PC-9 (cell line): ENCODE measurements at regions of chr13 and their contacts with region 1.

Region 1: GRCh38 chr13:113584205-113584869 is at the start of gene TFDP1:
- DNase-seq: peak; percentile 81 to 86
- H3K4me3 ChIP-seq: peak within 1 kb of the TSS; percentile 78
- H3K27ac ChIP-seq: no peak within 1 kb of the TSS
- H3K4me1 ChIP-seq: peaks cover 9% of the 10 kb centered on the region; the same call in 1 of the 2 replicates
- H3K27me3 ChIP-seq: no peaks in the 10 kb centered on the region
- CTCF ChIP-seq: no peak
- total RNA-seq, gene TFDP1: 84.2 and 107 TPM in 2 replicates

Region 2: GRCh38 chr13:113086031-113086750 is 498.1 kb before region 1 on chr13:
- CTCF ChIA-PET with region 1: no interaction called
- POLR2A ChIA-PET with region 1: no interaction called
- intact Hi-C with region 1: no loop called
- DNase-seq: no peak
- H3K4me3 ChIP-seq: no peak overlapping the region
- H3K27ac ChIP-seq: no peak overlapping the region
- H3K4me1 ChIP-seq: no peaks in the 10 kb centered on the region
- H3K27me3 ChIP-seq: no peaks in the 10 kb centered on the region
- CTCF ChIP-seq: no peak

Region 3: GRCh38 chr13:113490496-113491417 is 93.6 kb before region 1 on chr13 and contains the start of gene DCUN1D2:
- CTCF ChIA-PET with region 1: no interaction called
- POLR2A ChIA-PET with region 1: no interaction called
- intact Hi-C with region 1: loop called (anchors 1 kb)
- DNase-seq: peak; percentile 76 to 96
- H3K4me3 ChIP-seq: peak within 1 kb of the TSS; percentile 86
- H3K27ac ChIP-seq: peak within 1 kb of the TSS; percentile 23
- H3K4me1 ChIP-seq: peaks cover 55% of the 10 kb centered on the region
- H3K27me3 ChIP-seq: no peaks in the 10 kb centered on the region
- CTCF ChIP-seq: no peak
- total RNA-seq, gene DCUN1D2: 33.0 and 34.7 TPM in 2 replicates

Region 4: DNA sequence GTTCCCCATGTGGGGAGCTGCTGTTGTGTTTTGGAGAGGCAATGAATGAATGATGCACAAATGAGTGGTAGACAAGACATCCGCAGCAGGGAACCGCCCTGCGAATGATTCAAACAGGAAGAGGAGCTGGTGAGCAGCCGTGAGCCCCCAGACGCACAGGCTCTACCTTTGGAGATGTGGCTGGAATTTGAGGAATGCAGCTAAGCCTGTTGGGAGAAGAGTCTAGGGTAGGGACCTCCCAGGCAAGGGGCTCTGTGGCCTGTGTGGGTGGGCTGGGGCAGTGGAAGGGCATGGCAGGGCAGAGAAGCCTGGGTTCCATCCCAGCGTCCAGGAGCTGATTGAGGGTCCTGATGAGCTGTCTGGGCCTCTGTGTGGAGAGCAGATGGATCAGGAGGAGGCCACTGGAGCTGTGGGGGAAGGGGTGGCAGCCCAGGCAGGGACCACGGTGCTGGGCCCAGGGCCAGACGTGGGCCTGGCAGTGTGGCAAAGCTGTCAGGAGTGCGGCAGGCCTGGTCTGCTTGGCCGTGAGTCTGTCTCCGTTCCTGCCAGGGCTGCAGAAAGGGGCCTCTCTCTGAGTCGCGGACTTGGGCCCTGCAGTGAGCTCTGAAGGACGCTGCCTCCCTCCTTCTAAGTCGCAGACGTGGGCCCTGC is 52.1 kb before region 1 on chr13:
- CTCF ChIA-PET with region 1: no interaction called
- POLR2A ChIA-PET with region 1: interaction called, 4 read pairs
- intact Hi-C with region 1: loop called (anchors 2 kb)
- DNase-seq: peak; percentile 85 to 92
- H3K4me3 ChIP-seq: no peak overlapping the region
- H3K27ac ChIP-seq: peak overlapping the region; percentile 54
- H3K4me1 ChIP-seq: peaks cover 43% of the 10 kb centered on the region
- H3K27me3 ChIP-seq: no peaks in the 10 kb centered on the region
- CTCF ChIP-seq: no peak

Region 5: DNA sequence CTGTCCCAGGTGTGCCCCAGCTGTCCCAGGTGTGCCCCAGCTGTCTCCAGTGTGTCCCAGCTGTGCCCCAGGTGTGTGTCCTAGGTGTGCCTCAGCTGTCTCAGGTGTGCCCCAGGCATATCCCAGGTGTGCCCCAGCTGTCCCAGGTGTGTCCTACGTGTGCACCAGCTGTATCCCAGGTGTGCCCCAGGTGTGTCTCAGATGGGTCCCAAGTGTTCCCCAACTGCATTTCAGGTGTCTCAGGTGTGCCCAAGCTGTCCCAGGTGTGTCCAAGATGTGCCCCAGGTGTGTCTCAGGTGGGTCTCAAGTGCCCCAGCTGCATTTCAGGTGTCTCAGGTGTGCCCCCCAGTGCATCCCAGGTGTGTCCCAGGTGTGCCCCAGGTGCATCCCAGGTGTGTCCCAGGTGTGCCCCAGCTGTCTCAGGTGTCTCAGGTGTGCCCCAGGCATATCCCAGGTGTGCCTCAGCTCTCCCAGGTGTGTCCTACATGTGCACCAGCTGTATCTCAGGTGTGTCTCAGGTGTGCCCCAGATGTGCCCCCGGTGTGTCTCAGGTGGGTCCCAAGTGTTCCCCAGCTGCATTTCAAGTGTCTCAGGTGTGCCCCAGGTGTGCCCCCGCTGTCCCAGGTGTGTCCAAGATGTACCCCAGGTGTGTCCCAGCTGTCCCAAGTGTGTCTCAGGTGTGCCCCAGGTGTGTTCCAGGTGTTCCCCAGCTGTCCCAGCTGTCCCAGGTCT is 81.4 kb after region 1 on chr13:
- CTCF ChIA-PET with region 1: no interaction called
- POLR2A ChIA-PET with region 1: interaction called, 13 read pairs
- intact Hi-C with region 1: no loop called
- DNase-seq: no peak
- H3K4me3 ChIP-seq: no peak overlapping the region
- H3K27ac ChIP-seq: no peak overlapping the region
- H3K4me1 ChIP-seq: no peaks in the 10 kb centered on the region
- H3K27me3 ChIP-seq: peaks cover 83% of the 10 kb centered on the region
- CTCF ChIP-seq: no peak

Region 6: DNA sequence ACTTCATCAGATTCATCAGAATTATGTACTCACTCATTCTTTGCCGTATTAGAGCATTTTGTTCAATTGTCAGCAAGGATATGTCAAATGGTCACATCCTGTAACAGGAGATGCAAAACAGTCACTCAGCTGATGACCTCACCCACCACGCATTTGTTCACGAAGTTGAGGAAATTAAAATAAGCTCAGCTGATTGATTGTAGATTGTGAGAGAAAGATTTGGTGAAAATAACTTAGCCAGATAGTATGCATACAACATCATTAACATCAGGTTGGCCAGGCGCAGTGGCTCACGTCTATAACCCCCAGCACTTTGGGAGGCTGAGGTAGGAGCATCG is 627.8 kb after region 1 on chr13:
- CTCF ChIA-PET with region 1: interaction called, 11 read pairs
- POLR2A ChIA-PET with region 1: no interaction called
- intact Hi-C with region 1: no loop called
- DNase-seq: peak in 1 of 2 experiments; percentile 39
- H3K4me3 ChIP-seq: no peak overlapping the region
- H3K27ac ChIP-seq: no peak overlapping the region
- H3K4me1 ChIP-seq: no peaks in the 10 kb centered on the region
- H3K27me3 ChIP-seq: no peaks in the 10 kb centered on the region
- CTCF ChIP-seq: no peak